Activated CD4-positive, alpha-beta T cell treated with anti-CD3 and anti-CD28 coated beads for 36 hours (primary cell): ENCODE measurements at regions of chr1 and their contacts with region 1.

Region 1: GRCh38 chr1:161399257-161399998 is 31.8 kb upstream of the CFAP126 start:
- DNase-seq: peak; percentile 92
- ATAC-seq: peak; percentile 83
- H3K4me3 Mint-ChIP-seq: peak overlapping the region; percentile 89
- H3K27ac Mint-ChIP-seq: peak overlapping the region; percentile 100
- H3K4me1 Mint-ChIP-seq: peaks cover 34% of the 10 kb centered on the region
- H3K27me3 Mint-ChIP-seq: peaks cover 9% of the 10 kb centered on the region

Region 2: GRCh38 chr1:161244888-161245287 is 154.5 kb before region 1 on chr1:
- CTCF ChIA-PET with region 1: no interaction called
- POLR2A ChIA-PET with region 1: no interaction called
- intact Hi-C with region 1: no loop called
- DNase-seq: no peak
- ATAC-seq: no peak
- H3K4me3 Mint-ChIP-seq: no peak overlapping the region
- H3K27ac Mint-ChIP-seq: no peak overlapping the region
- H3K4me1 Mint-ChIP-seq: no peaks in the 10 kb centered on the region
- H3K27me3 Mint-ChIP-seq: peaks cover 9% of the 10 kb centered on the region

Region 3: GRCh38 chr1:161420763-161421455 is 21.5 kb after region 1 on chr1:
- CTCF ChIA-PET with region 1: interaction called, 3 read pairs
- POLR2A ChIA-PET with region 1: no interaction called
- intact Hi-C with region 1: loop called (anchors 1 kb)
- DNase-seq: peak; percentile 17
- ATAC-seq: no peak
- H3K4me3 Mint-ChIP-seq: peak overlapping the region; percentile 73
- H3K27ac Mint-ChIP-seq: no peak overlapping the region
- H3K4me1 Mint-ChIP-seq: peaks cover 6% of the 10 kb centered on the region
- H3K27me3 Mint-ChIP-seq: peaks cover 7% of the 10 kb centered on the region

Region 4: GRCh38 chr1:161440312-161440894 is 41.0 kb after region 1 on chr1:
- CTCF ChIA-PET with region 1: interaction called, 9 read pairs
- POLR2A ChIA-PET with region 1: no interaction called
- intact Hi-C with region 1: loop called (anchors 10 kb)
- DNase-seq: peak; percentile 83
- ATAC-seq: peak; percentile 58
- H3K4me3 Mint-ChIP-seq: peak overlapping the region; percentile 82
- H3K27ac Mint-ChIP-seq: peak overlapping the region; percentile 67
- H3K4me1 Mint-ChIP-seq: peaks cover 10% of the 10 kb centered on the region
- H3K27me3 Mint-ChIP-seq: peaks cover 27% of the 10 kb centered on the region

Region 5: DNA sequence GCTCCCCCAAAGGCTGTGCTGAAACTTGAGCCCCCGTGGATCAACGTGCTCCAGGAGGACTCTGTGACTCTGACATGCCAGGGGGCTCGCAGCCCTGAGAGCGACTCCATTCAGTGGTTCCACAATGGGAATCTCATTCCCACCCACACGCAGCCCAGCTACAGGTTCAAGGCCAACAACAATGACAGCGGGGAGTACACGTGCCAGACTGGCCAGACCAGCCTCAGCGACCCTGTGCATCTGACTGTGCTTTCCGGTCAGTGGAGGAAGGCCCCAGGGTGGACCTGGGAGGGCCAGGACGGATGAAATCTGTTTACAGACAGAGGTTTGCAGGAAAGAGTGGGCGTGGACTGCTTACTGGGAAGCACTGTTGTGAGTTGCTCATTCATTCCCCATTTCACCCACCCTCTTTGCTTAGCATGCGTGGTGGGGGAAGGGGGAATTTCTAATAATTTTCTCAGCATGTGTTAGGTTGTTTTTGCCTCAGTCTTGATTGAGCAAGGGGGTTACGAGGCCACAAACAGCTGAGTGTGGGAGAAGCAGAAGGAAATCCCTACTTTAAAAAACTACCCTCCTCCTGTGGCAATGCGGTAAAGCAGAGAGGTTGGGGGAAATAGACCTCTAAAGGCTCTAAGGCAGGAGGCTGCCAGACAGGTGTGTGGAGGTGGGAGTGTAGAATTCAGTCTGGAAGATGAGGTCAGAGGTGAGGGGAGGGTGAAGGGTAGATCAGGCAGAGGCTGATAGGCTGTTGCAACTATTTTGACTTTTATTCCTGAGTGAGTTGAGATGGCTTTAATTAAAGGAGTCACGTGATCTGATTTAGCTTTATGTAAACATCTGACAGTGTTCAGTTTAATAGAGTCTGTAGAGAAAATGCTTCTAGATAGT is 107.2 kb after region 1 on chr1:
- CTCF ChIA-PET with region 1: no interaction called
- POLR2A ChIA-PET with region 1: no interaction called
- intact Hi-C with region 1: no loop called
- DNase-seq: no peak
- ATAC-seq: peak; percentile 16
- H3K4me3 Mint-ChIP-seq: no peak overlapping the region
- H3K27ac Mint-ChIP-seq: no peak overlapping the region
- H3K4me1 Mint-ChIP-seq: peaks cover 8% of the 10 kb centered on the region
- H3K27me3 Mint-ChIP-seq: peaks cover 29% of the 10 kb centered on the region